ENCODE measurements at regions of chr2 and their contacts with region 1.

Region 1: GRCh38 chr2:55050133-55050994 is at the start of gene RTN4:
- DNase-seq: peak; percentile 98 to 99 (median 99)
- H3K4me3 ChIP-seq: peak within 1 kb of the TSS; percentile 88 to 93
- H3K4me3 Mint-ChIP-seq: peak within 1 kb of the TSS; percentile 94 to 100 (median 100)
- H3K27ac ChIP-seq: peak within 1 kb of the TSS; percentile 87
- H3K27ac Mint-ChIP-seq: peak within 1 kb of the TSS; percentile 93 to 100 (median 99)
- H3K4me1 ChIP-seq: peaks cover 70% of the 10 kb centered on the region
- H3K4me1 Mint-ChIP-seq: peaks cover 51 to 82% (median 60%) of the 10 kb centered on the region in 4 donors
- H3K27me3 ChIP-seq: no peaks in the 10 kb centered on the region
- H3K27me3 Mint-ChIP-seq: no peaks in the 10 kb centered on the region
- total RNA-seq, gene RTN4: 73.8 to 81.3 TPM

Region 2: GRCh38 chr2:54558188-54559005 is 492.0 kb before region 1 on chr2:
- CTCF ChIA-PET with region 1: no interaction called
- POLR2A ChIA-PET with region 1: interaction called, 10 read pairs
- intact Hi-C with region 1: loop called (anchors 5 kb)
- DNase-seq: peak; percentile 74 to 85 (median 75)
- H3K4me3 ChIP-seq: peak overlapping the region; percentile 94 to 99
- H3K4me3 Mint-ChIP-seq: peak overlapping the region; percentile 94 to 100 (median 98)
- H3K27ac ChIP-seq: peak overlapping the region; percentile 83
- H3K27ac Mint-ChIP-seq: peak overlapping the region; percentile 88 to 97 (median 94)
- H3K4me1 ChIP-seq: peaks cover 32% of the 10 kb centered on the region
- H3K4me1 Mint-ChIP-seq: peaks cover 34 to 68% (median 40%) of the 10 kb centered on the region in 4 donors
- H3K27me3 ChIP-seq: no peaks in the 10 kb centered on the region
- H3K27me3 Mint-ChIP-seq: no peaks in the 10 kb centered on the region

Region 3: GRCh38 chr2:55010149-55010591 is 40.2 kb before region 1 on chr2:
- CTCF ChIA-PET with region 1: interaction called, 14 read pairs
- POLR2A ChIA-PET with region 1: interaction called, 42 read pairs
- intact Hi-C with region 1: loop called (anchors 1 kb)
- DNase-seq: peak; percentile 50 to 82 (median 71)
- H3K4me3 ChIP-seq: peak overlapping the region; percentile 9 to 44
- H3K4me3 Mint-ChIP-seq: peak overlapping the region; percentile 83 to 97 (median 93)
- H3K27ac ChIP-seq: peak overlapping the region; percentile 44
- H3K27ac Mint-ChIP-seq: peak overlapping the region; percentile 80 to 98 (median 94)
- H3K4me1 ChIP-seq: peaks cover 80% of the 10 kb centered on the region
- H3K4me1 Mint-ChIP-seq: peaks cover 45 to 73% (median 60%) of the 10 kb centered on the region in 4 donors
- H3K27me3 ChIP-seq: no peaks in the 10 kb centered on the region
- H3K27me3 Mint-ChIP-seq: no peaks in the 10 kb centered on the region

Region 4: GRCh38 chr2:55033066-55033742 is 17.2 kb before region 1 on chr2:
- CTCF ChIA-PET with region 1: interaction called, 10 read pairs
- POLR2A ChIA-PET with region 1: interaction called, 16 read pairs
- intact Hi-C with region 1: loop called (anchors 1 kb)
- DNase-seq: no peak
- H3K4me3 ChIP-seq: no peak overlapping the region
- H3K4me3 Mint-ChIP-seq: peak overlapping the region in 2 of 8 donors; percentile 34 to 37
- H3K27ac ChIP-seq: no peak overlapping the region
- H3K27ac Mint-ChIP-seq: peak overlapping the region in 4 of 7 donors; percentile 13 to 43 (median 30)
- H3K4me1 ChIP-seq: peaks cover 68% of the 10 kb centered on the region
- H3K4me1 Mint-ChIP-seq: peaks cover 56 to 67% (median 61%) of the 10 kb centered on the region in 4 donors
- H3K27me3 ChIP-seq: no peaks in the 10 kb centered on the region
- H3K27me3 Mint-ChIP-seq: no peaks in the 10 kb centered on the region

Region 5: GRCh38 chr2:55168221-55169154 is 118.1 kb after region 1 on chr2:
- CTCF ChIA-PET with region 1: interaction called, 26 read pairs
- POLR2A ChIA-PET with region 1: interaction called, 5 read pairs
- intact Hi-C with region 1: loop called (anchors 1 kb)
- DNase-seq: peak; percentile 37 to 50 (median 41)
- H3K4me3 ChIP-seq: no peak overlapping the region
- H3K4me3 Mint-ChIP-seq: no peak overlapping the region
- H3K27ac ChIP-seq: no peak overlapping the region
- H3K27ac Mint-ChIP-seq: peak overlapping the region in 1 of 7 donors; percentile 0
- H3K4me1 ChIP-seq: no peaks in the 10 kb centered on the region
- H3K4me1 Mint-ChIP-seq: peaks cover 0 to 3% (median 1%) of the 10 kb centered on the region in 4 donors
- H3K27me3 ChIP-seq: no peaks in the 10 kb centered on the region
- H3K27me3 Mint-ChIP-seq: no peaks in the 10 kb centered on the region

Region 6: GRCh38 chr2:55232084-55232862 is 181.9 kb after region 1 on chr2 and contains the starts of genes CLHC1 and RPS27A:
- CTCF ChIA-PET with region 1: interaction called, 9 read pairs
- POLR2A ChIA-PET with region 1: interaction called, 43 read pairs
- intact Hi-C with region 1: loop called (anchors 1 kb)
- DNase-seq: peak; percentile 92 to 96 (median 94)
- H3K4me3 ChIP-seq: peak within 1 kb of the TSS; percentile 82 to 98
- H3K4me3 Mint-ChIP-seq: peak within 1 kb of the TSS; percentile 92 to 100 (median 100)
- H3K27ac ChIP-seq: peak within 1 kb of the TSS; percentile 97
- H3K27ac Mint-ChIP-seq: peak within 1 kb of the TSS; percentile 94 to 100 (median 98)
- H3K4me1 ChIP-seq: peaks cover 52% of the 10 kb centered on the region
- H3K4me1 Mint-ChIP-seq: peaks cover 46 to 75% (median 62%) of the 10 kb centered on the region in 4 donors
- H3K27me3 ChIP-seq: no peaks in the 10 kb centered on the region
- H3K27me3 Mint-ChIP-seq: no peaks in the 10 kb centered on the region
- total RNA-seq, gene CLHC1: 12.4 to 14.2 TPM
- total RNA-seq, gene RPS27A: 2,280 to 2,392 TPM

Region 7: GRCh38 chr2:55519938-55520885 is 469.8 kb after region 1 on chr2:
- CTCF ChIA-PET with region 1: no interaction called
- POLR2A ChIA-PET with region 1: interaction called, 14 read pairs
- intact Hi-C with region 1: loop called (anchors 1 kb)
- DNase-seq: peak in 2 of 5 donors; percentile 30 to 67
- H3K4me3 ChIP-seq: peak overlapping the region; percentile 69 to 84
- H3K4me3 Mint-ChIP-seq: peak overlapping the region; percentile 95 to 100 (median 98)
- H3K27ac ChIP-seq: peak overlapping the region; percentile 83
- H3K27ac Mint-ChIP-seq: peak overlapping the region; percentile 98 to 100 (median 99)
- H3K4me1 ChIP-seq: peaks cover 22% of the 10 kb centered on the region
- H3K4me1 Mint-ChIP-seq: peaks cover 11 to 23% (median 19%) of the 10 kb centered on the region in 4 donors
- H3K27me3 ChIP-seq: no peaks in the 10 kb centered on the region
- H3K27me3 Mint-ChIP-seq: no peaks in the 10 kb centered on the region

Measured in CD4-positive, alpha-beta memory T cell (primary cell).